Activated naive CD4-positive, alpha-beta T cell treated with anti-CD3 and anti-CD28 coated beads for 36 hours (primary cell): ENCODE measurements at regions of chr12 and their contacts with region 1.

Region 1: GRCh38 chr12:21642707-21643389 is 14.8 kb downstream of the LDHB start:
- DNase-seq: no peak
- H3K4me3 Mint-ChIP-seq: no peak overlapping the region
- H3K27ac Mint-ChIP-seq: peak overlapping the region; percentile 85
- H3K4me1 Mint-ChIP-seq: peaks cover 81% of the 10 kb centered on the region
- H3K27me3 Mint-ChIP-seq: no peaks in the 10 kb centered on the region

Region 2: GRCh38 chr12:21657326-21658077 is 14.7 kb after region 1 on chr12 and contains the start of gene LDHB:
- CTCF ChIA-PET with region 1: interaction called, 5 read pairs
- intact Hi-C with region 1: loop called (anchors 1 kb)
- DNase-seq: peak; percentile 98
- H3K4me3 Mint-ChIP-seq: peak within 1 kb of the TSS; percentile 98
- H3K27ac Mint-ChIP-seq: peak within 1 kb of the TSS; percentile 98
- H3K4me1 Mint-ChIP-seq: peaks cover 59% of the 10 kb centered on the region
- H3K27me3 Mint-ChIP-seq: no peaks in the 10 kb centered on the region
- total RNA-seq, gene LDHB: 2,296 to 2,461 TPM